ENCODE measurements at regions of chr1 and their contacts with region 1.

Region 1: DNA sequence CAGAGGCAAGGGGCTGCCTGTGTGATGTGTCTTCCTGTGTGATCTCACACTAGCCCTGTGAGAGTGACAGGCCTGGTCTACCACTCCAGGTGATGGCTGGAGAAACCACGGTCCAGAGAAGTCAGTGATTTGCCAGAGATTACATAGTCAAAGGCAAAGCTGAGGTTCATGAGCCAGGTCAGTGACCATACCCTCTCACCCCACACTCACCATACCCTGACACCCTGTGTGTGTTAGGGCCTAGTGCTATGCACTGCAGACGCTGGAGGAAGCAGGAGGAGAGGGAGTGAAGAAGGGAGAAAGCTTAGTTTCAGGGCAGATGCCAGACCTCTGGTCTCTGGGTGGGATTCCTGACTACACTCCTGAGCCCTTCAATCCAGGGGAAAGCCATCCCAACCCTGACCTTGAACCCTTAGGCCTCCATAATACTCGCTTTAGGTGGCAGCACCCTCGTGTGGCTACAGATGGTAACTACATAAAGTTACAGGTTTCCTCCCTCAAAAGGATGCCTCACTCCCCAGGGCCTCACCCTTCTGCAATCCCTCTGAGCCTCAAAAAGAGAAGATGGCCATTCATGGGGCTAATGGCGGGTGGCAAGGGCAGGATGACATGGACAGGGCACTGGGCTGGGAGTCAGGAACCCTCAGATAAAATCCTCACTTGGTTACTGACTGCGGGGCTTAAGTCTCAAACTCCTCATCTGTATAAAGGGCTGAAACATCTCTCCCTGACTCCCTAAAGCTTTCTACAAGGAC is 20.8 kb upstream of the SDC3 start:
- DNase-seq: peak; percentile 39 to 70 (median 59)
- H3K4me3 ChIP-seq: no peak overlapping the region
- H3K27ac ChIP-seq: no peak overlapping the region
- H3K4me1 ChIP-seq: no peaks in the 10 kb centered on the region
- H3K27me3 ChIP-seq: no peaks in the 10 kb centered on the region

Region 2: GRCh38 chr1:30744060-30744756 is 185.1 kb before region 1 on chr1:
- CTCF ChIA-PET with region 1: no interaction called
- POLR2A ChIA-PET with region 1: no interaction called
- DNase-seq: peak in 2 of 3 donors; percentile 54 to 59
- H3K4me3 ChIP-seq: peak overlapping the region in 2 of 7 experiments; percentile 0 to 20
- H3K27ac ChIP-seq: peak overlapping the region in 1 of 2 experiments; percentile 56
- H3K4me1 ChIP-seq: peaks cover 18 to 98% (median 94%) of the 10 kb centered on the region in 4 experiments
- H3K27me3 ChIP-seq: no peaks in the 10 kb centered on the region

Region 3: DNA sequence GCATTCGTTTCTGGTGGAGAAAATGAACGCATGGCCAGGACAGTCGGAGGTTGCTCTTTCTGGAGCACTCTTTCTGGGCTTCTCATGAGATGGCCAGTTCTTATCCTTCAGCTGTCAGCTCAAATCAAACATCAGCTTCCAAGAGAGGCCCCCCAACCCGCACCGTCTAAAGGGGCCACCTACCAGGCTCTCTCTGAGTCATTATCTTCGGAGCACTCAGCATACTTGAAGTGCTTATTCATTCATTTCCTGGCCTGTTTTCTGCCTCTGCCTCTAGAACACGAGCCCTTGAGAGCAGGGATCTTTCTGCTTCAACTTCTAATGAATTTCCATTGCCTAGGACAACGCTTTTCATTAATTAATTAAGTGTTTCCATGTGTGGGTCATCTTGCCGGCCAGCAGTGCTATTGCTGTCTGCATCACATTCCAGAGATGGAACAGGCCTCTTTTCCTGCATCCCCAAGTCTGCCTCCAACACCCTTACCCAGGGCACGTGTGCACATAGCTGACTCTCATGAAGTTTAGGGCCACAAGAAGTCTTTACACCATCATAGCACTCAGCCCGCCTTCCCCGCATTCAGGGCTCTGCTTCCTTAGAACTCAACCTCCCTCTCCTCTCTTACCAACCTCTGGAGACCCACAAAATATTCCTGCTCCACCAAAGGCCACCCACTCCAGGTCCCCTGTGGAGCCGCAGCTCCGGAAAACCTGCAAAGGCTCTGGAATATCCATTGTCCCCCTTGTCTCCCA is 119.6 kb before region 1 on chr1:
- CTCF ChIA-PET with region 1: interaction called, 161 read pairs
- POLR2A ChIA-PET with region 1: interaction called, 3 read pairs
- DNase-seq: peak in 2 of 3 donors; percentile 43 to 48
- H3K4me3 ChIP-seq: no peak overlapping the region
- H3K27ac ChIP-seq: no peak overlapping the region
- H3K4me1 ChIP-seq: peaks cover 0 to 3% (median 1%) of the 10 kb centered on the region in 4 experiments
- H3K27me3 ChIP-seq: peaks cover 7 to 93% (median 56%) of the 10 kb centered on the region in 5 experiments

Region 4: GRCh38 chr1:30919025-30919881 is 10.1 kb before region 1 on chr1:
- CTCF ChIA-PET with region 1: interaction called, 17 read pairs
- POLR2A ChIA-PET with region 1: interaction called, 4 read pairs
- DNase-seq: peak; percentile 95 to 99 (median 99)
- H3K4me3 ChIP-seq: peak overlapping the region in 2 of 7 experiments; percentile 11 to 62
- H3K27ac ChIP-seq: peak overlapping the region in 1 of 2 experiments; percentile 75
- H3K4me1 ChIP-seq: peaks cover 0 to 28% (median 26%) of the 10 kb centered on the region in 4 experiments
- H3K27me3 ChIP-seq: peaks cover 0 to 6% (median 2%) of the 10 kb centered on the region in 5 experiments

Region 5: DNA sequence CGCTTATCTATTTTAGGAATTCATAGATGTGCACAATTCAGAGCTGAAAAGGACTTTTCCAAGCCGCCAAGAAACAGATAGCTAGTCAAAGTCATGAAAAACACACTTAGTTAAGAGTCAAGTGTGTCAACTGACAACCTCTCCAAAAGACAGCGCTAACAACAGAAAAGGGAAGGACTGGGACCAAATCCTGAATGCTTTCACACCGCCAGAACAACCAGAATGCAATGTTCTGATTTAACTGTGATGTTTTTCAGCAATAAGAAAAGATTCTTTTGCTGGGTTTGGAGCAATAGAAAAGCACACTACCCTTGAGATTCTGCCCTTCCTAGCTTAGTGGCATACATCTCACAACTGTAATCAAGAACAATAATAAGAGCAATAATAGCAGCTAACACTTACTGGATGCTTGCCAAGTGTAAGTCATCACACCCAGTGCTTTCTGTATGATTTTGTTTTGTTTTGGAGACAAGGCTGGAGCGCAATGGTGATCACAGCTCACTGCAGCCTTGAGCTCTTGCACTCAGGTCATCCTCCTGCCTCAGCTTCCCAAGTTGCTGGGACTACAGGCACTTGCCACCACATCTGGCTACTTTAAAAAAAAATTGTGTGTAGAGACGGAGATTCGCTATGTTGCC is 13.1 kb after region 1 on chr1:
- CTCF ChIA-PET with region 1: interaction called, 14 read pairs
- POLR2A ChIA-PET with region 1: interaction called, 4 read pairs
- DNase-seq: no peak
- H3K4me3 ChIP-seq: no peak overlapping the region
- H3K27ac ChIP-seq: no peak overlapping the region
- H3K4me1 ChIP-seq: no peaks in the 10 kb centered on the region
- H3K27me3 ChIP-seq: no peaks in the 10 kb centered on the region

Region 6: GRCh38 chr1:31102484-31102950 is 173.2 kb after region 1 on chr1:
- CTCF ChIA-PET with region 1: no interaction called
- POLR2A ChIA-PET with region 1: no interaction called
- DNase-seq: no peak
- H3K4me3 ChIP-seq: no peak overlapping the region
- H3K27ac ChIP-seq: no peak overlapping the region
- H3K4me1 ChIP-seq: peaks cover 0 to 16% (median 3%) of the 10 kb centered on the region in 4 experiments
- H3K27me3 ChIP-seq: no peaks in the 10 kb centered on the region

Region 7: DNA sequence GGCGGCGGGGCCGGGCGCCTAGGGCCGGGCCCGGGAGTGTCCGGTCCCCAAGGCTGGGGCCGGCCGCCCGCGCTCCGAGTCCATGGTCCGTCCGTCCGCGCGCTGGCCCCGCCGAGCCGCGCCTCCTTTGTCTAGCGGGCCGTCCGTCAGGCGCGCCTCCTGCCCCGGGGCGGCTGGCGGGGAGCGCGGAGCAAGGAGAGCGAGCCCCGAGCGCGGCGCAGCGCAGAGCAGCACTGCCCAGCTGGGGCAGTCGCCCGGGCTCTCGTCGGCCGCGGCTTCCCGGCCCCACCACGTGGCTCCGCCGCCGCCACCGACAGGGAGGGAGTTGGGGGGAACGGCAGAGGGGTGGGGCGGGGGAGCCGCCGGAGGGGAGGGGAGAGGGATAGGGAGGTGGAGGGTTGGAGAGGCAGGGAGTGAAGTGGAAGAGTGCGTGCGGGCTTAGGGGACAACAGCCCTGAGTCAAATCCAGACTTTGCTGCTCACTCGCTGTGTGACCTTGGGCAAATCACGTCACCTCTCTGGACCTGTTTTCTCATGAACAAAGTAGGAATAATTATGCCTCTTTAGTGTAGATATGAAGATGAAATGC is 310.4 kb after region 1 on chr1 and contains the start of gene NKAIN1:
- CTCF ChIA-PET with region 1: no interaction called
- POLR2A ChIA-PET with region 1: no interaction called
- DNase-seq: peak in 2 of 3 donors; percentile 14 to 42
- H3K4me3 ChIP-seq: peak within 1 kb of the TSS; percentile 8 to 66 (median 43)
- H3K27ac ChIP-seq: no peak within 1 kb of the TSS
- H3K4me1 ChIP-seq: peaks cover 0 to 14% (median 11%) of the 10 kb centered on the region in 4 experiments
- H3K27me3 ChIP-seq: peaks cover 9 to 66% (median 40%) of the 10 kb centered on the region in 5 experiments

Measured in common myeloid progenitor, CD34-positive (primary cell).